Activated CD4-positive, alpha-beta memory T cell treated with anti-CD3 and anti-CD28 coated beads for 36 hours (primary cell): ENCODE measurements at regions of chr2 and their contacts with region 1.

Region 1: GRCh38 chr2:230712443-230713330 is at the start of gene CAB39:
- DNase-seq: peak; percentile 91
- H3K4me3 Mint-ChIP-seq: peak within 1 kb of the TSS; percentile 93
- H3K27ac Mint-ChIP-seq: peak within 1 kb of the TSS; percentile 91
- H3K4me1 Mint-ChIP-seq: peaks cover 41% of the 10 kb centered on the region
- H3K27me3 Mint-ChIP-seq: no peaks in the 10 kb centered on the region
- total RNA-seq, gene CAB39: 128 to 129 TPM

Region 2: DNA sequence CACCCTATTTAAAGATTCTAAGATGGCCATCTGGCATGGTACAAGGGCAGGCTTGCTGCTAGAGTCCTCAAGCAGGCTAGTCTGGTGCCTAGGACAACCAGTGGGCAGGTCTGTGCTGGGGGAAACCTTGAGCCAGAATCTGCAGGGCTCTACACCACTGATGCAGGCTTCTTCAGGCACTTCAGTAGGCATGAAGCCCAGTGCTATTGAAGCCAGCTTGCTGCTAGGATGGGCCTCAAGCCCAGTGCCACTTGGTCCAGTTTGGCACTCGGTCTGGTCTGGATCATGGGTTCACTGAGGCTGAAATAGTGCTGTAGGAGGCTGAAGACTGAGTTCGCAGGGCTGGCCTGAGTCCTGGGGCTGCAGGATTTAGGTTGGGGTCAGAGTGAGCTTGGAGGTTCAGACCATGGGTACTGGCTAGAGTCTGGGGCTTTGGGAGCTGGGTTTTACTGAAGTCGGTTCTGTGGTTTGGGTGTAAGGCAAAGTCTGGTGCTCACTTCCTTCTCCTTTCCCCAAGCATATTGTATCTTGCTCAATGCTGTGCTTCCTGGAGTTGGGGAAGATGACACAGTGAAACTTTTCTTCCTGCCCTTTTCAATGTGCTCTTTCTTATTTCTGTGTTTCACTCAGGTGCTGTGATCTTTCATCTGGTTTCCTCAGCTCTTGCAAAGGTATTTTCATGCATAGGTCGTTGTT is 255.5 kb before region 1 on chr2:
- CTCF ChIA-PET with region 1: no interaction called
- POLR2A ChIA-PET with region 1: no interaction called
- intact Hi-C with region 1: no loop called
- DNase-seq: no peak
- H3K4me3 Mint-ChIP-seq: no peak overlapping the region
- H3K27ac Mint-ChIP-seq: peak overlapping the region; percentile 62
- H3K4me1 Mint-ChIP-seq: peaks cover 68% of the 10 kb centered on the region
- H3K27me3 Mint-ChIP-seq: no peaks in the 10 kb centered on the region

Region 3: GRCh38 chr2:230668184-230668938 is 44.3 kb before region 1 on chr2:
- CTCF ChIA-PET with region 1: interaction called, 20 read pairs
- POLR2A ChIA-PET with region 1: interaction called, 17 read pairs
- intact Hi-C with region 1: no loop called
- DNase-seq: peak; percentile 77
- H3K4me3 Mint-ChIP-seq: peak overlapping the region; percentile 28
- H3K27ac Mint-ChIP-seq: peak overlapping the region; percentile 87
- H3K4me1 Mint-ChIP-seq: peaks cover 72% of the 10 kb centered on the region
- H3K27me3 Mint-ChIP-seq: no peaks in the 10 kb centered on the region